Cardiac septum (tissue), 1 donor: ENCODE measurements at regions of chr18 and their contacts with region 1.

Region 1: GRCh38 chr18:21997207-21998143 is 171.9 kb upstream of the GATA6 start:
- DNase-seq: no peak

Region 2: DNA sequence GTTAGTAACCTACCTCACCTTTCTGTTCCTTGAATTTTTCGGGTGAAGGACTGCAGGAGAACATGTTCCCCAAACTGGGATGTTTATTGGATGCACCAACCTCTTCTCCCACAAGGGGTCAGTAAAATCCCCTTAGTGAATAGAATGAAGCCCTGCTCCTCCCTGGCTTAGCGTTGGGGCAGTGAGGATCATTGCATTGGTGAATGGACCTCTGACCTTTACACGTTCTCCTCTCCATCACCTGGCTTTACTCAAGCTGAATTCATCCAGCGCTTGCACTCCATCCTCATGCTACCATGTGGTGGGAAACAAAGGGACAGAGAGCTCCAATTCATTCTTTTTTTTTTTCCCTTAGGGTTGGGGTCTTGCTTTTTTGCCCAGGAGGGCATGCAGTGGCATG is 99.7 kb before region 1 on chr18:
- intact Hi-C with region 1: loop called (anchors 5 kb)
- DNase-seq: no peak

Region 3: DNA sequence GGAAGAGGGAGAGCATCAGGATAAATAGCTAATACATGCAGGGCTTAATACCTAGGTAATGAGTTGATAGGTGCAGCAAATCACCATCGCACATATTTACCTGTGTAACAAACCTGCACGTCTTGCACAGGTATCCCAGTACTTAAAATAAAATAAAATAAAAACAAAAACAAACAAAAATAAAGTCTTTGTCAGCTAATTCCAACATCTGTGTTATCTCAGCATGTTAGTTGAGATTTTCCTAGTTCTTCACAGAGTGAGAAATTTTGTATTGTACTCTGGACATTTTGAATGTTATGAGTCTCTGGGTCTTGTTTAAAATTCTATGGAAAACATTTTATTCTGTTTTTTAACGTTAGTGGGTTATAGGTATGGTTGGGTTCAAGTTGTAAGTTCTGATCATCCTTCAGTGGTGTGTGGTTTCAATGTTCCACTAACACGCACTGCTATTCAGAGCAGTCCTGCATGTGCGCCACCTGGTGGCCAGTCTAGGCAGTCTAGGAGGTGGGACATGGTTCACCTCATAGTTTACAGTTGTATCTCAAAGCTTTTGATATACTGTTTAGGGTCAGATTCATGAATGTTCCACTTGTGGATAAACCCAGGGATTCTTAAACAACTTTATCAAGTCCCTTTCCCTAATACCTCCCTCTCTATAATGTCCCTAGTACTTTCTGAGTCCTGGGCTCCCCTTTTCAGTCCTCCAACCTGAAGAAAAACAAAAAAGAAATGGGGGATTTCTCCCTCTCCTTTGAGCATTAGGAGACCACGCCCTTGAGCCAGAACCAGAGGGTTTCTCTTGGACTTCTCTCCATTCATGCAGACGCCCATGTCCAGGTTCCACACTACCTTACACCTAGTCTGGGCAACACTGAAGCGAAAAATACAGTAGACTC is 41.5 kb before region 1 on chr18:
- intact Hi-C with region 1: loop called (anchors 5 kb)
- DNase-seq: peak; percentile 82

Region 4: DNA sequence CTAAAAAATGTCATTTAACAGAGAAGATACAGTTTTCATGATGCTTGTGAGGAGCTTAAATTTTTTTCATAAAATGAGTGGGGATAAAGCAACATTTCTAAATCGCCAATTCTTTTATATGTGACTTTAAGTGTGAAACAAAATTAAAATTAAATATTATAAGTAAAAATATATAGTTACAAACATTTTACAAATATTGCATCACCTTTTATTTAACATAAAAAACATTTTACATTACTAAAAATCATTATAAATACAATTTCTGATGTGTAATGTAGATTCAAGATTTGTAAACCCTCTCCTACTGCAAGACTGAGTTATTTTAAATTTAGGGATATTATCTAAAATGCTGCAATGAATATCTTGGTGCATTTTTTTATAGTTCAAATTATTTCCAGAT is 127.5 kb after region 1 on chr18:
- intact Hi-C with region 1: no loop called
- DNase-seq: no peak